ENCODE measurements at regions of chr19 and their contacts with region 1.

Region 1: DNA sequence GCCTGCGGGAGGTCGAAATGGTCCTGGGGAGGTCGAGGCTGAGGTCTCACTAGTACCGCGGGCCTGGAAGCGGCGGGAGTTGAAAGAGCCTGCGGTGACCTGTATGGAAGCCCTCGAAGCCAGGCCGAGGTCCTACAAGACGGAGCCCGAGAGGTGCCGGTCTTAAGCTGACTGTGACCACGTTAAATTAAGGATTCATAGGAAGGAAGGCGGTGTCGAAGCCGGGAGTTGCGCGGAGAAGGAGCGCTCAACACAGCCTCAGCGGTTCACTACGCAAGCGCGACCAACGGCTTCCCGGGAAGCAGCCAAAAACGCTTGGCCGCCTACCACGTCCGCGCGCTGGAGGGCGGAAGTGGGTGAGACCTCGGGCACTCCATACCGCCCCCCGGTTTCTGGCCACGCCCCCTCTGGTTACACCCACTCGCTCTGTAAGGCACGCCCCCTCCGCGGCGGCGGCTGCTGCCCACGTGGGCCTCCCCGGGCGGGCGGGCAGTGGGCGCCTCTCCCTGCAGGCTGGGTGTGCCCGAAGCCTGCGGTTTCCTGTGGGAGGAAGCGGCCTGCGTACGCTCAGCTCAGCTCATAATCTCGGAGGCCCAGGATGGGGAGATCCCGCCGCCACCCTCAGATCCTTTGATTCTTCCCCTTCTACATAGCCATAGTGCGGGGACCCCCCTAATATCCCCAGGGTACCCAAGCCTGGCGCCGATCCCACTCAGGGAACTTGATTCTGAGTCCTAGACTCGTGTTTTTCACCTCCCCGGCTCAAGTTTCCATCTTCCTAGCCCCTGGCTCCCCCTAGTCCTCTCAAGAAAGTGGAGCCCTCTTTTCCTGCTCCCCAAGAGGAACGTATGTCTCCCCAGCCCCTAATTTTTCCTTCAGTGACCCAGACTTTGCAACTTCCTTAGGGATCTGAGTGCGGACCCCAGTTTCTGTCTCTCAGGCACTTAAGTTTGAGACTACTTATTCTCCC is 3.4 kb upstream of the EMP3 start:
- DNase-seq: peak; percentile 100
- H3K4me3 Mint-ChIP-seq: peak overlapping the region; percentile 83
- H3K27ac Mint-ChIP-seq: peak overlapping the region; percentile 98
- H3K4me1 Mint-ChIP-seq: peaks cover 58% of the 10 kb centered on the region
- H3K27me3 Mint-ChIP-seq: no peaks in the 10 kb centered on the region

Region 2: DNA sequence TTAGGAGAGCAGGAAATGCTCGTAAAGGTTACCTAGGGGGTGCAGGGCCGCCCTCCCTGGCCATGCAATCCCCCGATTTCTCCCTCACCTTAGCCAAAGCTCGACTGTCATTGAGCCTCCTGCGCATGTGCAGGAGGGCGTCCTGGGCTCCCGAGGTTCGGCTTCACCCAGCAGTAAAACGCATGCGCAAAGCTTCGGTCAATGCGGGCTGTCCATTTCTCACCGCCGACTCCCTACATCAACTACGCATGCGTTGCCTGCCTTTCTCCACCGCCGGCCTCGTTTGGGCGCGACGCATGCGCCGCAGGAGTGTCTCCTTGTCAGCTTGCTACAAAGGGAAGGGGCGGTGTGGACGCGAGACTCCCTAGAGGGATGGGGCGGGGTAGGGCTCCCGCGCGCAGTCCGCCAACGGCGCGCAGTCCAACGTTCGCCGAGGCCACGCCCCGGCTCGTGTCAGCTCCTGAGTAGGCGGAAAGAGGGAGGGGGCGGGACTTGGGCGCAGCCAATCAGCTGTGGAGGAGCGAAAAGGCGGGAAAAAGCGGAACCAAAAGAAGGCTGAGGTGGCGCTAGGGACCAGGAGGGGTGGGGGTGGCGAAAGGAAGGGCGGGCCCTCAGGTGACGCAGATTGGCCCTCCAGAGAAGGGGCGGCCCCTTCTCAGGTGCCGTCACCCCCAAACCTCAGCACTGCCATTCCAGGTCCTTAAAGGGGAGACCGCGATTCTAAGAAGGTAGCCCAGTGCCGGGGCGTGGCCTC is 42.1 kb after region 1 on chr19 and contains the starts of genes SYNGR4 and TMEM143:
- CTCF ChIA-PET with region 1: interaction called, 9 read pairs
- POLR2A ChIA-PET with region 1: interaction called, 19 read pairs
- DNase-seq: peak; percentile 99
- H3K4me3 Mint-ChIP-seq: peak within 1 kb of the TSS; percentile 82
- H3K27ac Mint-ChIP-seq: peak within 1 kb of the TSS; percentile 95
- H3K4me1 Mint-ChIP-seq: peaks cover 22% of the 10 kb centered on the region
- H3K27me3 Mint-ChIP-seq: no peaks in the 10 kb centered on the region
- total RNA-seq, gene SYNGR4: 0.28 TPM in 1 of 2 experiments, not detected in the other
- total RNA-seq, gene TMEM143: 17.4 to 18.2 TPM

Measured in activated CD4-positive, alpha-beta memory T cell treated with anti-CD3 and anti-CD28 coated beads, Interleukin-2, amount 10 ng/mL, durations not matched to agents 7 days and 5 days (primary cell).